PC-3 (cell line): ENCODE measurements at regions of chr17 and their contacts with region 1.

Region 1: DNA sequence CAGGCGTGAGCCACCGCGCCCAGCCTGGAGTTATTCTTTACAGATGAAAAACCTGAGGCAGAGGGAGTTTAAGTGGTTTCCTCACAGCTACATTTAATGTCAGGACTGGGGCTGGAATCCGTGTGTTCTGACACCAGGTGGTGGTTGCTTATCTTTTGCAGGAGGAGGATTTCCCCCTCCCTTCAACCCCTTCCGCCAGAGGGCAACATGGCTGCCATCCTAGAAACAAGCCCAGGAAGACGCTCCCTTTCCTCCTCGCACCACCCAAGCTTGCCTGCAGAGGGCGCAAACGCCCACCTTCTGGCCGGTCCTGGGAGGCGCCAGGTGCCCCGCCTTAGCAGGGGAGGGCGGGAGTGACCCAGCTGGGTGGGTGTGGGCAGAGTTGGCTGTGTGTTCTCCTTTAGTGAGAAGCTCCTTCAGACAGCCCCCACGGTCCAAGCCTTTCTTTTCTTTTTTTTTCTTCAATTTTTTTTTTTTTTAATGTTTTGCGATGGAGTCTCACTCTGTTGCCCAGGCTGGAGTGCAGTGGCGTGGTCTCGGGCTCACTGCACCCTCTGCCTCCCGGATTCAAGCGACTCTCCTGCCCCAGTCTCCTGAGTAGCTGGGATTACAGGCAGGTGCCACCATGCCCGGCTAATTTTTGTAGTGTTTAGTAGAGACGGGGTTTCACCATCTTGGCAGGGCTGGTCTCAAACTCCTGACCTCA is 9.9 kb upstream of the RAP1GAP2 start:
- DNase-seq: peak; percentile 92
- ATAC-seq: peak; percentile 98
- H3K4me3 ChIP-seq: no peak overlapping the region
- H3K27ac ChIP-seq: no peak overlapping the region
- H3K4me1 ChIP-seq: no peaks in the 10 kb centered on the region
- H3K27me3 ChIP-seq: no peaks in the 10 kb centered on the region
- CTCF ChIP-seq: peak; percentile 78

Region 2: GRCh38 chr17:2770129-2770528 is 16.2 kb before region 1 on chr17:
- CTCF ChIA-PET with region 1: no interaction called
- POLR2A ChIA-PET with region 1: interaction called, 19 read pairs
- intact Hi-C with region 1: no loop called
- DNase-seq: no peak
- ATAC-seq: no peak
- H3K4me3 ChIP-seq: no peak overlapping the region
- H3K27ac ChIP-seq: no peak overlapping the region
- H3K4me1 ChIP-seq: no peaks in the 10 kb centered on the region
- H3K27me3 ChIP-seq: peaks cover 1% of the 10 kb centered on the region; the same call in 1 of the 2 replicates
- CTCF ChIP-seq: no peak